ENCODE measurements at regions of chr11 and their contacts with region 1.

Region 1: GRCh38 chr11:116879800-116880625 is 42.6 kb upstream of the APOA1 start:
- H3K4me3 ChIP-seq: no peak overlapping the region
- H3K27ac ChIP-seq: no peak overlapping the region
- H3K4me1 ChIP-seq: no peaks in the 10 kb centered on the region
- CTCF ChIP-seq: no peak

Region 2: DNA sequence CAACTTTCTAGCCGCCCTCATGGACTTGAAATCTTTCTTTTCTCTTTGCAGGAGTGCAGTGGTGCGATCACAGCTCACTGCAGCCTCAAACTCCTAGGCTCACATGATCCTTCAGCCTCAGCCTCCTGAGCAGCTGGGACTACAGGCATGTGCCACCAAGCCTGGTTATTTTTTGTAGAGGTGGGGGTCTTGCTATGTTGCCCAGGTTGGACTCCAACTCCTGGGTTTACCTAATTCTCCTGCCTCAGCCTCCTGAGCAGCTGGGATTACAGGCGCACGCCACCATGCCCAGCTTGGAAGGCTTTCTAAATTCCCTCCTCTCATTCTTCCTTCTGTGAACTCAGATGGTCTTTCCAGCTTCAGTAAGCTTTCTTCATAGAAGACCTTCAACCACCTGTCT is 37.9 kb before region 1 on chr11:
- CTCF ChIA-PET with region 1: no interaction called
- POLR2A ChIA-PET with region 1: no interaction called
- H3K4me3 ChIP-seq: no peak overlapping the region
- H3K27ac ChIP-seq: no peak overlapping the region
- H3K4me1 ChIP-seq: no peaks in the 10 kb centered on the region
- CTCF ChIP-seq: no peak

Region 3: DNA sequence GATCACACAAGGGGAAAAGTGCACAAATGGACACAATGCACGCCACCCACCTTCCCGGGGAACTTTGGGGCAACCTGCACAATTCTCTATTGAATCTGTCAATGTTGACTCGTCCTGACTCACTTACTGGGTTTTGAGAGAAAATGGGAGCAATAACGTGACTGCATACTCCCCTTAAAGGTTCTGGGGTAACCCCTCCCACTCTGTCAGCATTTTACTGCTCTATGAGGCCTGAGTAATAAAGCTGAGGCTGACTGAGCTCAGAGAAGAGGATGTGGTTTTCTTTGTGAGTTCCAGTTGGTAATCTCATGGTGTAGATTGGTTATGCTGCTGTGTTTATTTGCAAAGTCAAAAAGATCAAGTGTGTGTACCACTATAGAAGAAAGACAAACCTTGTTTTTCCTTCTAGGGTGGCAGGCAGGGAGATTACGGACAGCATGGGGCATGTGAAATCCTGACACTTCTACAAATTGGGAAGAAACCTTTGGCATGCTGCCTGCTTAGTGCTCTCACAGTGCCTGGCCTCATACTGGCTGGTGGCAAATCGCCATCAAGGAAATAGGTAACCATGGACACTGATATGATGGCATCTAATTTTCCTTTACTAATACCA is 26.4 kb before region 1 on chr11:
- CTCF ChIA-PET with region 1: interaction called, 10 read pairs
- POLR2A ChIA-PET with region 1: no interaction called
- H3K4me3 ChIP-seq: no peak overlapping the region
- H3K27ac ChIP-seq: no peak overlapping the region
- H3K4me1 ChIP-seq: peaks cover 2% of the 10 kb centered on the region; the same call in 1 of the 2 replicates
- CTCF ChIP-seq: no peak

Region 4: DNA sequence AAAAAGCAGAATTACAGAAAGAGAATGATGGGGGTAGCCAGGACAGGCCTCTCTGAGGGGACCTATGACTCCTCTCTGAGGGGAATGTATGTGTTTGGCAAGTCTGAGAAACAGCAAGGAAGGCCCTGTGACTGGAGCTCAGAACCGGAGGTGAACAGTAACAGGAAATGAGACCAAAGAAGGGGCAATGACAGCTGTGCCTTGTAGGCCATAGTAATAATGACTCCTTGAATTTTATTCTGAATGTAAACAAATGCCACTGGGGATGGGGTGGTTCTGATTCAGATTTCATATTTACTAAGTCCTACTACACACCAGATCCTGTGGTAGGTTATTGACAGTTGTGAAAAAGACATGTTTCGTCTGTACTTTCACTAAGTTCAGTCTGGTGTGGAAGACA is 10.2 kb after region 1 on chr11:
- CTCF ChIA-PET with region 1: interaction called, 22 read pairs
- POLR2A ChIA-PET with region 1: no interaction called
- H3K4me3 ChIP-seq: no peak overlapping the region
- H3K27ac ChIP-seq: no peak overlapping the region
- H3K4me1 ChIP-seq: no peaks in the 10 kb centered on the region
- CTCF ChIP-seq: no peak

Region 5: GRCh38 chr11:116895048-116895757 is 15.2 kb after region 1 on chr11:
- CTCF ChIA-PET with region 1: interaction called, 22 read pairs
- POLR2A ChIA-PET with region 1: no interaction called
- H3K4me3 ChIP-seq: no peak overlapping the region
- H3K27ac ChIP-seq: no peak overlapping the region
- H3K4me1 ChIP-seq: no peaks in the 10 kb centered on the region
- CTCF ChIP-seq: 0 out of 2 replicates have a peak, but pooled peaks have one; percentile 18

Region 6: DNA sequence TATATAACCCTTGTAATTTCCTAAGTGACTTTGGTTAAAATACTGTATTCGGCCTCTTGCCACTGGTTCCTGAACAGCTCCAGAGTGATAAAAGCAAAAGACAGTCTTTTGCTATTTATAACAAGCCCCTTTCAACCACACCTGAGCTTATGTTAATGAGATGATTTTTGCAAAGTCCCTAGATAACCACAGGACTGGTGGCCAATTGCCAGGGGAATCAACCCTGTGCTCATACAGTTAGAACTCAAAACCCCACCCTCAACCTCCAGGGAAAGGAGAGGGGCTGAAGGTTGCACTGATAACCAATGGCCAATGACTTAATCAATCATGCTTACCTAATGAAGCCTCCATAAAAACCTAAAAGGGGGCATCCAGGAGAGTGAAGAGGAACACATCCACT is 140.3 kb after region 1 on chr11:
- CTCF ChIA-PET with region 1: no interaction called
- POLR2A ChIA-PET with region 1: no interaction called
- H3K4me3 ChIP-seq: no peak overlapping the region
- H3K27ac ChIP-seq: no peak overlapping the region
- H3K4me1 ChIP-seq: peaks cover 11% of the 10 kb centered on the region
- CTCF ChIP-seq: no peak

Region 7: DNA sequence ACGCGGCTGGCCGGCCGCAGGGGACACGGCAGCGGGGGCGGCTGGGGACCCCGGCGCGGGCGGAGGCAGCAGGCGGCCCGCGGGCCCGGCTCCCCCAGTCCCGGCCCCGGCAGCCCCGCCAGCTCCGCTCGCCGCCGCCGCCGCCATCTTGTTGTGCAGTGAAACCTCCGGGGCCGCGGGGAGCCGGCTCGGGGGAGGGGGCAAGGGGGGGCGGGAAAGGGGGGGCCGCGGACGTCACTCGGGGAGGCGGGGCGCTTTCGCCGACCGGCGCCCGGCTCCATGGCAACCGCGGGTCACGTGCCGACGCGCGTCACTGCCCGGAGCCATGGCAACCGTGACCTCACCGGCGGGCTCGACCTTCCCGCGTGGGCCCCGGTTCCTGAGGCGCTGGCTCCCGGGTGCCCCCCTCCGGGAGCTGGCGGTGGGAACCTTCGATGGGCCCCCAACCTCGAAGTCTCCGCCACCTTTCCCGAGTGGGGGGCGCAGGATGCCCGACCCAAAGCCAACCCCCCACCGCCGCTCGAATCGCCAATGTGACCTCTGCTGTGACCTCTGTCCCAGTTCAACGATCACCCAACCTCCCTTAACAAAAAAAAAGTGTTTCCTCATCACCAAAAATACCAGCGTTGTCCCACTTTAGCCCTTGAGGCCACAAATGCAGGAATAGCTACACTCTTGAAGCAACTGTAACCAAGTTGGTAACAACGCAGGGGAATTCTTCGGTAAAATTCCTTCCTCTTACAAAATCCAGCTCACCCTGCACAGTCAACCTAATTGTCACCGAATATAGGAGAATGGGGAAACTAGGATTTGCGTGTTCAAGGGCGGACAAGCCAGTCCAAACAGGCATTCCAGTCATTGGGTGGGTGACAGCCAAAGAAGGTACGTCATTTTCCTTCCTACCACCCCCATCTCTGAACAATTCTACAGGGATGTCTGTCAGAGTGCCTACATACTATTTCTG is 218.5 kb after region 1 on chr11 and contains the start of gene SIK3:
- CTCF ChIA-PET with region 1: interaction called, 12 read pairs
- POLR2A ChIA-PET with region 1: no interaction called
- H3K4me3 ChIP-seq: peak within 1 kb of the TSS; percentile 96
- H3K27ac ChIP-seq: peak within 1 kb of the TSS; percentile 81
- H3K4me1 ChIP-seq: no peaks in the 10 kb centered on the region
- CTCF ChIP-seq: peak; percentile 75

Region 8: GRCh38 chr11:117107701-117108590 is 227.9 kb after region 1 on chr11:
- CTCF ChIA-PET with region 1: interaction called, 96 read pairs
- POLR2A ChIA-PET with region 1: interaction called, 3 read pairs
- H3K4me3 ChIP-seq: no peak overlapping the region
- H3K27ac ChIP-seq: no peak overlapping the region
- H3K4me1 ChIP-seq: no peaks in the 10 kb centered on the region
- CTCF ChIP-seq: no peak

Region 9: DNA sequence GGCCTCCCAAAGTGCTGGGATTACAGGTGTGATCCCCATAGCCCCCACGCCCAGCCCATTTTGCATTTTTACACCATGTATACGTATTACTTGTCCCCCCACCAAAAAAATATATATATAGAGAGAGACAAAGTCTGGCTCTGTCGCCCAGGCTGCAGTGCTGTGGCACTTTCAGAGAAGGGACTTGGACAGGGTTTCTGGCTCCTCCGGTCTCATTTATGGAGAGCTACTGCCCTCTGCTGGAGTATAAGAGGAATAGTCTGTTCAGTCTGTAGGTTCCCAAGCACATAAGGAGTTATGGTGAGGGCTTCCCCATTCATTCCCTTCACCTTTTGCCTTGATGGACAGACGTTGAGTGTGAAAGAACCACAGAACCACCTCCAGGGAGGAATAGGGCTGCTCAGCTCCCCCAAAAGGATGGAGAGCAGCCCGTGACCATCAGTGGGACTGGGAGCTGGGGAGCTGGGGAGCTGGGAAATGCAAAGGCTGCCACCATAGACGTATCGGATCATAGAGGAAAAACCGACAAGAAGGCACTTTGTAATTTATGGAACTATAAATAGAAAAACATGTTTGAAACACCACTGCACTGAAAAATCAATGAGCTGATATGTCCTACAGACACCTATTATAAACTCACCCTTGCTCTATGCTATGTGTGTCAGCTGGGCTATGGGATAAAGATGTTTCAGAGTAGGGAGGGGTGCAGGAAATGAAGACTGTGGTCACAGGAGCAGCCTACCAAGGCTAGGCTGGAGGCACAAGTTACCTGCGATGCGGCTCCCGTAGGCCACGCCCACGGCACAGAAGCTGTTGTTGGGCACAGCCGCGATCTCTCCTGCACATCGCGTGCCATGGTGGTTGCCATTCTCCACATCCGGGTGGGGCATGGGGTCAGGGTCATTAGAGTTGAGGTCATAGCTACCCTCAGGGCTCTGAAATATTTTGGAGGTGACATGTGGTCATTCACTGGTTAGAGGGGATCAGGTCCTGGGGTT is 346.7 kb after region 1 on chr11:
- CTCF ChIA-PET with region 1: interaction called, 11 read pairs
- POLR2A ChIA-PET with region 1: no interaction called
- H3K4me3 ChIP-seq: no peak overlapping the region
- H3K27ac ChIP-seq: no peak overlapping the region
- H3K4me1 ChIP-seq: peaks cover 3% of the 10 kb centered on the region; the same call in 1 of the 2 replicates
- CTCF ChIP-seq: no peak

Measured in HEK293 (cell line).